Posterior vena cava (tissue), 2 donors: ENCODE measurements at regions of chr6 and their contacts with region 1.

Region 1: DNA sequence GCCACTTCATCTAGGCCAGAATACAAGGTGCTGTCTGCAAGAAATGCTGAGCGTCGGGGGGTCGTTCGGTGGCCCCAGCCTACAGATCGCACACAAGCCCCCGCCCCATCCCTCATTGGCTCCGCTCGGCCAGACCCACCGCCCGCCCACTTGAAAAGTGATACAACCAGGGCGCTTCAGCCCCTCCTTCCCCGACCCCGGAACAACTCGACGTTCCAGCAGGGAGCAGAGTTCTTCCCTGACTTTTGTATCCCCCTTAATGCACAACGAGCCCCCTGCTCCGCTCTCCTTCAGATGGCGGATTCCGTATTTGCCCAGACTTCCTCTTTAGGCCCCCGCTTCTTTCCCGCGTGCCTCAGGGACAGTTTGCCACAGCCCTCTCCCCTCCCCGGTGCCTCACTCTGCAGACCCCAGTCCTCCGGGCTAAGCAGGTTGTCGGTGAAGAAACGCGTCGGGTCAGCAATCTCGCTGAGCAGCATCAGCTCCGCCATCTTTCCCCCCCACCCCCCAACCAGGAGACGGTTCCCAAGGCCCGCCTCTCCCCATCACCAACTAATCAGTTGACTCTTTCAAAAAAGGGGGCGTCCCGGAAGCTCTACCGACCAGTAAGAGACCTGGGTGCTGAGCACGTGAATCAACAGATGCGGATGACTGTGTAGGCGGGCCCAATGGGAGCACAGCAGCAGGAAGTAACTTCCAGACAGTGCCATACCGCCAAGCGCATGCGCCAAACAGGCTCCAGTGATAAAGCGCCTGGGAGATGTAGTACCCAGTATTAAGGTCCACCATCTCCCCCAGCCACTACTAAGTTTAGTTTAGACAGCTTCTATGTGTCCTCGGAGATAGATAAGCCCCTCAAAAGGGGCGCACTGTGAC is at the start of gene ATF6B:
- DNase-seq: peak; percentile 99
- total RNA-seq, gene ATF6B: 39.0 to 63.1 TPM

Region 2: GRCh38 chr6:32177788-32178546 is 50.0 kb after region 1 on chr6 and contains the start of gene RNF5:
- intact Hi-C with region 1: loop called in 1 of 2 experiments (anchors 5 kb)
- DNase-seq: peak; percentile 98
- total RNA-seq, gene RNF5: 43.2 to 46.7 TPM

Region 3: DNA sequence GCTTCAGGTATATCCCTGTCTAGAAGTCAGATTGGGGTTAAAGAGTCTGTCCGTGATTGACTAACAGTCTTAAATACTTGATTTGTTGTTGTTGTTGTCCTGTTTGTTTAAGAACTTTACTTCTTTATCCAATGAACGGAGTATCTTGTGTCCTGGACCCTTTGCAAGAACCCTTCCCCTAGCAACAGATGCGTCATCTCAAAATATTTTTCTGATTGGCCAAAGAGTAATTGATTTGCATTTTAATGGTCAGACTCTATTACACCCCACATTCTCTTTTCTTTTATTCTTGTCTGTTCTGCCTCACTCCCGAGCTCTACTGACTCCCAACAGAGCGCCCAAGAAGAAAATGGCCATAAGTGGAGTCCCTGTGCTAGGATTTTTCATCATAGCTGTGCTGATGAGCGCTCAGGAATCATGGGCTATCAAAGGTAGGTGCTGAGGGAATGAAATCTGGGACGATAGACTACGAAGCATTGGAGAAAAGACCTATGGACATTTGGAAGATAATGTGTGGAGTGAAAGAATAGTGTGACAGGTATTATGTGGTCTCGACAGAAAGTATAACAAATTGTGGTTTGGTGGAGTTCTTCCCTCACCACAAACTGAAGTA is 311.8 kb after region 1 on chr6 and contains the start of gene HLA-DRA:
- intact Hi-C with region 1: no loop called
- DNase-seq: no peak
- total RNA-seq, gene HLA-DRA: 101 to 225 TPM